Activated CD4-positive, alpha-beta T cell treated with anti-CD3 and anti-CD28 coated beads for 36 hours (primary cell): ENCODE measurements at regions of chr1 and their contacts with region 1.

Region 1: DNA sequence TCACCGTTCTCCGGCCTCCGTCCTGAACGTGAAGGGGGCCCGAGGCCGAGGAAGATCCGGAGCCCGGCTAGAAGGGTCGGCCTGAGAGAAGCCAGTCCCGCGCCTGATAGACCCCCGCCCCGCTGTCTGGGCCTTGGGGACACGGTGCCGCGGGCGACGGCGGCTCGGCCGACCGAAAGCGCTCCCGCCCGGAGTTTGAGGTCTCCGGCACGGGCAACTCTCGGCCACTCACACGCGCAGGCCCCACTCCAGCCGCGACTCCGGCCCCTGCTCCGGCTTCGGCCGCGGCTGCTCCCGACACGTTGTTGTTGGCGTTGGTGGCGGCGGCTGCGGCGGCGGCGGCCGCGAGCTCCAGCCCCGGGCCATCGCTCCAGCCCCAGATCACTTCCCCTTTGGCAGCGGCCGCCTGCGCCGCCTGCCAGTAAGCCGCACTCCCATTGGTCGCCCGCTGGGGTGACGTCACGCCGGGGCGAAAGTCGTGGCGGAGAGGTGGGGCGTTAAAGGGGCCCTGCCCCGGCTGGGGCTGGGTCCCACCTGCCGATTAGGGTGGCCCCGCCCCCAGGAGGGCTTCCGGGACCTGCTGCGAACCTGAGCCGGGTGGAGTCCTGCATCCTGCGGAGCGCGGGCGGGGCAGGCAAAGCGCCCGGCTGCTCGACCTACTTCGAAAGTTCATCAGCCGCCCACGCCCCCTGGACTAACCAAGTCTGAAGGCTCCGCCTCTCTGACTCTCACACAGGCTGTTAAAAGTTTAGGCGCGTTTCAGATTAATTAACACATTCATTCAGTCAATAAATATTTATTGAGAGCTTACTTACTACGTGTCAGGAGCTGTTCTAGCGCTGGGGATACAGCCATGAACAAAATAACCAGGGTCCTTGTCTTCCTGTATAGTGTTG is at the start of gene EFCAB14:
- DNase-seq: peak; percentile 99
- ATAC-seq: peak; percentile 99
- H3K4me3 Mint-ChIP-seq: peak within 1 kb of the TSS; percentile 90
- H3K27ac Mint-ChIP-seq: peak within 1 kb of the TSS; percentile 87
- H3K4me1 Mint-ChIP-seq: peaks cover 35% of the 10 kb centered on the region
- H3K27me3 Mint-ChIP-seq: no peaks in the 10 kb centered on the region
- total RNA-seq, gene EFCAB14: 37.8 to 54.3 TPM

Region 2: DNA sequence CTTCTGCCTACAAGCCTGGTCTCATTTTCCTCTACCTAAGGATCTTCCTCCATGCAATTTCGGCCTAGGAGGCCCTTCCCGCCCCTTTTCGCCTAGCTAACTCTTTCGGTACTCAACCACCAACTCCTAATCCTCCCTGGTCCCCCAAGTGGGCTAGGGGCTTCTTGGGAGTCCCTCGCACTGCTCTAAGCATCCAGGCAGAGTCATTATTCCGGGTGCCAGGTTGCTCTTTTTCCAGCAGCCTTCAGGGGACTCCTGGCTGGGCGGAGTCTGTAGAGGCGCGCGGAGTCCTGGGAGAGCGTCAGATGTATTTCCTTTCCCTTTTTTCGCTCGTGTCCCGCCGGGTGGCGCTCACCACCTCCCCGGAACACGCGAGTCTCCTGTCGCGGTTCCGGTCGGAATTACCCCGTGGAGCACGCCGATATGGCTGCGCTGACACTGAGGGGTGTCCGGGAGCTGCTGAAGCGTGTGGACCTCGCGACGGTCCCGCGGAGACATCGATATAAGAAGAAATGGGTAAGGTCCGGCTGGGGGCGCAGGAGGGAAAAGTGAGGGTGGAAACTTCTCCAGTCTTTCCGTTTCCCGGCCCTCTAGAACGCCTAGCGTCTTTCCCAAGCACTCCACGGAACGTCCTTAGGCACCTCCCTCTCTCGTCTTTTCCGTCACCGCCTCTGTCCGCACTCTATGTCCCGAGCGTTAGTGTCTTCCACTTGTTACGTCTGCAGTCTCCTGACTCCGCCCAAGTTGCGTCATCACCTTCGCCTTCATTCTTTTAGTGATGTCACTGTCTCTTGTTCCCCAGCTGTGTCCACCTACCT is 378.4 kb before region 1 on chr1 and contains the start of gene NSUN4:
- CTCF ChIA-PET with region 1: no interaction called
- POLR2A ChIA-PET with region 1: no interaction called
- intact Hi-C with region 1: loop called in 1 of 2 experiments (anchors 1 kb)
- DNase-seq: peak; percentile 93
- ATAC-seq: peak; percentile 94
- H3K4me3 Mint-ChIP-seq: peak within 1 kb of the TSS; percentile 87
- H3K27ac Mint-ChIP-seq: peak within 1 kb of the TSS; percentile 99
- H3K4me1 Mint-ChIP-seq: peaks cover 44% of the 10 kb centered on the region
- H3K27me3 Mint-ChIP-seq: no peaks in the 10 kb centered on the region
- total RNA-seq, gene NSUN4: 26.1 to 31.3 TPM

Region 3: GRCh38 chr1:46603858-46604549 is 115.0 kb before region 1 on chr1 and contains the start of gene MKNK1:
- CTCF ChIA-PET with region 1: interaction called, 4 read pairs
- POLR2A ChIA-PET with region 1: interaction called, 3 read pairs
- intact Hi-C with region 1: loop called (anchors 1 kb)
- DNase-seq: peak; percentile 99
- ATAC-seq: peak; percentile 98
- H3K4me3 Mint-ChIP-seq: peak within 1 kb of the TSS; percentile 87
- H3K27ac Mint-ChIP-seq: peak within 1 kb of the TSS; percentile 82
- H3K4me1 Mint-ChIP-seq: peaks cover 55% of the 10 kb centered on the region
- H3K27me3 Mint-ChIP-seq: no peaks in the 10 kb centered on the region
- total RNA-seq, gene MKNK1: 27.8 to 31.0 TPM

Region 4: GRCh38 chr1:46667782-46668760 is 50.9 kb before region 1 on chr1 and contains the start of gene ATPAF1:
- CTCF ChIA-PET with region 1: interaction called, 5 read pairs
- POLR2A ChIA-PET with region 1: no interaction called
- intact Hi-C with region 1: loop called (anchors 1 to 2 kb)
- DNase-seq: peak; percentile 84
- ATAC-seq: peak; percentile 96
- H3K4me3 Mint-ChIP-seq: no peak within 1 kb of the TSS
- H3K27ac Mint-ChIP-seq: peak within 1 kb of the TSS; percentile 75
- H3K4me1 Mint-ChIP-seq: peaks cover 19% of the 10 kb centered on the region
- H3K27me3 Mint-ChIP-seq: no peaks in the 10 kb centered on the region
- total RNA-seq, gene ATPAF1: 46.1 to 48.5 TPM

Region 5: DNA sequence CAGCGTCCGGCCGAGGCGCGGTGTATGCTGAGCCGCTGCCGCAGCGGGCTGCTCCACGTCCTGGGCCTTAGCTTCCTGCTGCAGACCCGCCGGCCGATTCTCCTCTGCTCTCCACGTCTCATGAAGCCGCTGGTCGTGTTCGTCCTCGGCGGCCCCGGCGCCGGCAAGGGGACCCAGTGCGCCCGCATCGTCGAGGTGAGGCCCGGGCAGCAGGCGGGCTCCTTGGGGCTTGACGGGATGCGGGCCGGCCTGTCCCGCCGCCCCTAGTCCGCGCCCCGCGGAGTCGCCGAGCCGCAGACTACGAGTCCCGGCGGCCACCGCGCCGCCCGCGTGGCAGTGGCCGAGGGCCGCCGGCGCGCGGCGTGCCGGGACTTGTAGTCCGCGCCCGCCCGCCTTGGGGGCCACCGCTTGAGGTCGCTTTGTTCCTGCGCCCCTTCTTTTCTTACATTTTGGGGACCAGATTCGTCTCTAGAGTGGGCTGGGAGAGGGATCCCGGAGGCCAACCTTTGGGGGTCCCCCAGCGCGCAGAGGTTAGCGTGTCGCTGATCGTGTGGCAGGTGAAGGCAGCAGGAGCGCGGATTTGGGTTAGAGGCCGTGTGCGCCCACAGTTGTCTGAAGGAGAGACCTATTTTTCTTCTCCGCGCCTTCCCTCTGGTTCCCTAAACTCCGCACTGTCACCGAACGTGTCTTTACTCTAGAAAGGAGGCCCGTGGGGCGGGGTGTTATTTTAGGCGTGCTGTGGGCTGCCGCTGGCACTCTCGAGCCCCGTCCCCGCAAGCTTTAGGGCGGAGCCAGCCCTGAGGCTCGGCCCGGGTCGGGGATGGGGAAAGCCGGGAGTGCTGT is 615.2 kb after region 1 on chr1:
- CTCF ChIA-PET with region 1: no interaction called
- POLR2A ChIA-PET with region 1: no interaction called
- intact Hi-C with region 1: loop called in 1 of 2 experiments (anchors 5 kb)
- DNase-seq: peak; percentile 85
- ATAC-seq: peak; percentile 90
- H3K4me3 Mint-ChIP-seq: no peak overlapping the region
- H3K27ac Mint-ChIP-seq: peak overlapping the region; percentile 88
- H3K4me1 Mint-ChIP-seq: peaks cover 23% of the 10 kb centered on the region
- H3K27me3 Mint-ChIP-seq: no peaks in the 10 kb centered on the region